ENCODE measurements at regions of chr1 and their contacts with region 1.

Region 1: DNA sequence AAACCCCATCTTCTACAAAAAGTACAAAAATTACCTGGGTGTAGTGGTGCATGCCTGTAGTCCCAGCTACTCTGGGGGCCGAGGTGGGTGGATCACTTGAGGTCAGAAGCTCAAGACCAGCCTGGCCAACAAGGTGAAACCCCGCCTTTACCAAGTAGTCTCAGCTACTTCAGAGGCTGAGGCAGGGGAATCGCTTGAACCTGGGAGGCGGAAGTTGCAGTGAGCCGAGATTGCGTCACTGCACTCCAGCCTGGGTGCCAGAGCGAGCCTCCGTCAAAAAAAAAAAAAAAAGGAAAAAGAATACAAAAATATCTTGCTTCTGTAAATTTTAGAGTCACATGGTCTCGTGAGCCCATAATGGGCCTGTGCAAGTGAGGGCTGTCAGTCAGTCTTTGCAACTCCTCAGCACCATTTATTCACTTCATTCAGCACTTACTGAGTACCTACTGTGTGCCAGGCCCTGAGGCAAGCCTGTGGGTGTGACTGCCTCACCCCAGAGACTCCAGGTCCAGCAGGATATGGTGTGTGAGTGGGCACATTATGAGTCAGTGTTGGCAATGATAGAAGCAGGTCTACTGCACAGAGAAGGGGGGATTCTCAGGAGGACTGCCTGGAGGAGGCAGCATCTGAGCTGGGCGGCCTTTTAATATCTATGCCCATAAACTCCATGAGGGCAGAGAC is 46.8 kb upstream of the TARDBP start:
- DNase-seq: peak; percentile 58
- ATAC-seq: peak; percentile 81
- H3K4me3 ChIP-seq: 0 out of 2 replicates have a peak overlapping the region, but pooled peaks have one; percentile 25
- H3K27ac ChIP-seq: peak overlapping the region; percentile 77
- H3K4me1 ChIP-seq: peaks cover 69% of the 10 kb centered on the region
- H3K27me3 ChIP-seq: no peaks in the 10 kb centered on the region
- CTCF ChIP-seq: no peak
- EP300 ChIP-seq: no peak; a peak in 1 of 4 replicates
- POLR2A ChIP-seq: no peak
- RAD21 ChIP-seq: no peak

Region 2: GRCh38 chr1:10378081-10378841 is 587.4 kb before region 1 on chr1:
- CTCF ChIA-PET with region 1: no interaction called
- POLR2A ChIA-PET with region 1: no interaction called
- RAD21 ChIA-PET with region 1: no interaction called
- SMC1A ChIA-PET with region 1: no interaction called
- in situ Hi-C with region 1: no loop called
- intact Hi-C with region 1: no loop called
- DNase-seq: no peak
- ATAC-seq: no peak; the same call in 2 of the 3 replicates
- H3K4me3 ChIP-seq: no peak overlapping the region
- H3K27ac ChIP-seq: no peak overlapping the region
- H3K4me1 ChIP-seq: peaks cover 6% of the 10 kb centered on the region
- H3K27me3 ChIP-seq: no peaks in the 10 kb centered on the region
- CTCF ChIP-seq: no peak
- EP300 ChIP-seq: no peak
- POLR2A ChIP-seq: no peak
- RAD21 ChIP-seq: no peak

Region 3: DNA sequence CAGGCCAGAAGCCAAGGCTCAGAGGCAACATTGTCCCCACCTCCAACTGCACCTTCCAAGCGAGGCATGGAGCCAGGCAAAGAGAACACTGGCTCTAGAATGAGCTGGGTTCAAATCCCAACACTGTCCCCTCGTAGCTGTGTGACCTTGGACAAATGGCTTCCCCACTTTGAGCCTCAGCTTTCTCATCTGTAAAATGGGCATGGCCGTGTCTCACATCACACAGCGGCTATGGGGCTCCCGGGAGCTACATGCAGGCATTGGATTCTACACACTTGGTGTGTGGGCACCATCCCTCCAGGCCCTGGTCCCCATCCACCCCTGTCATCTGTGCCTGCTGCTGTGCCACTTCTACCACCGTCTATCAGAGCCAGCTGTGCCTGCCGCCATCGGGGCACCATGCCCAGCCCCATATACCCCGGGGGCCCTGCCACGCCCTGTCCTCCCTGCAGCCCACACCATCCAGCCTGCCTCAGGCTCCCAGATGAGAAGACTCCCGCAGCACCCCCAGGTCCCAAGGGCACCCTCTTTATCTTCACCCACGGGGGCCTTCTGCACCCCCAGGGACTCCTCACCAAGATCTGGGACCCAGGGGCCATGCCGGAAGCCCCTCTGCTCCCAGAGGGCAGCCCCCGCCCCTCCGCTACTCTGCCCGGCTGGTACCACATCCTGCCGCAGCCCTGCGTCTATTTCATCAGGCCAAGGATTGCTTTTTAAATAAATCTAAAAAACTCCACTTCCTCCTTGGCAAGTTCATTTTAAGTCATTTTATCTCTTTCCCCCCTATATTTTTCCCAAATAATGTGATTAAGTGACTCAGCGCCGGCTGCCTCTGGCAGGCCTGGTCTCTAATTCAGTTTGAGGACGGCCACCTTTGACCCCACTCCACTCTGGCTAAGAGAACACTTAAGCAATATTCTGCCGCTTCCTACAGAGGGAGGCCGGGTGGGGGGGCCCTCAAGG is 61.0 kb before region 1 on chr1:
- CTCF ChIA-PET with region 1: no interaction called
- POLR2A ChIA-PET with region 1: no interaction called
- RAD21 ChIA-PET with region 1: no interaction called
- SMC1A ChIA-PET with region 1: no interaction called
- in situ Hi-C with region 1: no loop called
- intact Hi-C with region 1: no loop called
- DNase-seq: no peak
- ATAC-seq: no peak
- H3K4me3 ChIP-seq: no peak overlapping the region
- H3K27ac ChIP-seq: no peak overlapping the region
- H3K4me1 ChIP-seq: peaks cover 2% of the 10 kb centered on the region; the same call in 1 of the 2 replicates
- H3K27me3 ChIP-seq: peaks cover 0 to 10% of the 10 kb centered on the region in 2 experiments
- CTCF ChIP-seq: no peak
- EP300 ChIP-seq: no peak
- POLR2A ChIP-seq: no peak
- RAD21 ChIP-seq: no peak

Region 4: DNA sequence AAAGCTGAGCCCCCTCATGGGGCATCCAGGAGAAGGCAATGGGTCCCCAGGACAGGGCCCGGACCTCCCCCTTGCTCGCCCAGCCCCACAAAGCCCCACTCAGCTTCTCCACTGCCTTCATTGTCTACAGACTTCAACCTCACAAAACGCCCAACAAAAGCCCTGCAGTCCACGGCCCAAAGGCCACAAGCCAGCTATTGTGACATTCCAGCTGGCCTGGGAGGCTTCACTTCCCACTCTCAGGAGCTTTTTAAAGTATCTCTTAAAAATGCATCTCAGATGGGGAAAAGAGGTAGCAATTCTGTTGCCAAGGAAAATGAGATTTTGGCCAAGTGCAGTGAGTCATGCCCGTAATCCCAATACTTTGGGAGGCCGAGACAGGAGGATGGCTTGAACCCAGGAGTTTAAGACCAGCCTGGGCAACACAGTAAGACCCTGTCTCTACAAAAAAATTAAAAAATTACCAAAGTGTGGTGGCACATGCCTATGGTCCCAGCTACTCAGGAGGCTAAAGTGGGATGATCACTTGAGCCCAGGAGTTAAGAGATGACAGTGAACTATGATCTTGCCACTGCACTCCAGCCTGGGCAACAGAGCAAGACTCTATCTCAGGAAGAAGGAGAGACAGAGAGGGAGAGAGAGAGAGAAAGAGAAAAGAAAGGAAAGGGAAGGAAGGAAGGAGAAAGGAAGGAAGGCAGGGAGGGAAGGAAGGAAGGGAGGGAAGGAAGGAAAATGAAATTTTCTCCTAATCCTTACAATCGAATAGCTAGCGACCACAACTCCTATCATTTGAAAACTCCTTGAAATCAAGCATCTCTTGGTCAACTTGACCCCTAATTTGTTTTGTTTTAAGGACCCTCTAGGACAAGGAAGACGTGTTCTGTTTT is 15.4 kb after region 1 on chr1:
- CTCF ChIA-PET with region 1: interaction called, 40 read pairs
- POLR2A ChIA-PET with region 1: interaction called, 41 read pairs
- RAD21 ChIA-PET with region 1: interaction called, 89 read pairs
- SMC1A ChIA-PET with region 1: interaction called, 118 read pairs
- in situ Hi-C with region 1: no loop called
- intact Hi-C with region 1: loop called (anchors 1 kb)
- DNase-seq: no peak
- ATAC-seq: no peak
- H3K4me3 ChIP-seq: no peak overlapping the region
- H3K27ac ChIP-seq: no peak overlapping the region
- H3K4me1 ChIP-seq: peaks cover 26% of the 10 kb centered on the region
- H3K27me3 ChIP-seq: no peaks in the 10 kb centered on the region
- CTCF ChIP-seq: no peak
- EP300 ChIP-seq: no peak
- POLR2A ChIP-seq: no peak
- RAD21 ChIP-seq: no peak

Region 5: DNA sequence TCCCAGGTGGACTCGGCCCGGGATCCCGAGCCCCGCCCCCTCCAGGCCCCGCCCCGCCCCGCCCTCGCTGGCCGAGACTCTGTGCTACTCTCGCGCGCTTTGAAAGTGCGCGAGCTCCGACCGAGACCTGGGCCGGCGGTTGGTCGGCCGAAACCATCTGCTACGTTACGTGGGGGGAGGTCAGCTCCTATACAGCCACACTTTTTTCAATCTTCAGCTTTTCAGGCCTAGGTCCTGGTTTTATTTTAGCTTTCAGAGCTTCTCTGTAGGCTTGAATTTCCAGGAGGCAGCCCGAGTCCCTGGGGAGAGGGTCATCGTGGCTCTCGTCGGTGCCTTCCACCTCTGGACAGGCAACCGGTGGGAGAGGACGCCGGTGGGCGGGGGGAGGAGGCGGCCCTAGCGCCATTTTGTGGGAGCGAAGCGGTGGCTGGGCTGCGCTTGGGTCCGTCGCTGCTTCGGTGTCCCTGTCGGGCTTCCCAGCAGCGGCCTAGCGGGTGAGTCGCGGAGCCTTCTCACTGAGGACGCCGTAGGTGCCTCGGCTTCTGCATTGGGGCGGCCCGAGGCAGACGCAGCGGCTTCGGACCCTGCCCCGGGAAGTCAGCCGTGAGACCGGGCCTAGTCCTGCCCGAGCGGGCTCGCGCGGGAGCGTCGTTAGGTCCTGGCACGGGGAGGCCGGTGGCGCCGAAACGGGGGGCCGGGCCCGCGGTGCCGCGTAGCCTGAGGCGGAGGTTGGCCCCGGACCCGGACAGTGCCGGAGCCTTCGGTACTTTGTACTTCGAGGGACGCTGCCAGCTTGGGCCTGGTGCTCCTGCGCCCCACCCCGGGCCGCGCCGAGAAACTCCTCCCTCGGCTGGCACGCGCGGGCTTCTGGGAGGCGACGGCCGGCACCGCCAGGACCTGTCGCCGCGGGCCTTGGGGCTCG is 46.8 kb after region 1 on chr1 and contains the start of gene TARDBP:
- CTCF ChIA-PET with region 1: interaction called, 6 read pairs
- POLR2A ChIA-PET with region 1: interaction called, 8 read pairs
- RAD21 ChIA-PET with region 1: interaction called, 4 read pairs
- SMC1A ChIA-PET with region 1: interaction called, 20 read pairs
- in situ Hi-C with region 1: no loop called
- intact Hi-C with region 1: loop called (anchors 1 kb)
- DNase-seq: peak; percentile 72
- ATAC-seq: peak; percentile 93
- H3K4me3 ChIP-seq: peak within 1 kb of the TSS; percentile 78
- H3K27ac ChIP-seq: peak within 1 kb of the TSS; percentile 100
- H3K4me1 ChIP-seq: peaks cover 5% of the 10 kb centered on the region; the same call in 1 of the 2 replicates
- H3K27me3 ChIP-seq: no peaks in the 10 kb centered on the region
- CTCF ChIP-seq: no peak
- EP300 ChIP-seq: peak in 1 of 2 experiments; percentile 11; a peak in 1 of 4 replicates
- POLR2A ChIP-seq: peak; percentile 98
- RAD21 ChIP-seq: no peak
- polyA plus RNA-seq, gene TARDBP: 76.1 to 171 TPM

Measured in GM12878 (cell line).